CD4-positive, alpha-beta memory T cell (primary cell): ENCODE measurements at regions of chr2 and their contacts with region 1.

Region 1: DNA sequence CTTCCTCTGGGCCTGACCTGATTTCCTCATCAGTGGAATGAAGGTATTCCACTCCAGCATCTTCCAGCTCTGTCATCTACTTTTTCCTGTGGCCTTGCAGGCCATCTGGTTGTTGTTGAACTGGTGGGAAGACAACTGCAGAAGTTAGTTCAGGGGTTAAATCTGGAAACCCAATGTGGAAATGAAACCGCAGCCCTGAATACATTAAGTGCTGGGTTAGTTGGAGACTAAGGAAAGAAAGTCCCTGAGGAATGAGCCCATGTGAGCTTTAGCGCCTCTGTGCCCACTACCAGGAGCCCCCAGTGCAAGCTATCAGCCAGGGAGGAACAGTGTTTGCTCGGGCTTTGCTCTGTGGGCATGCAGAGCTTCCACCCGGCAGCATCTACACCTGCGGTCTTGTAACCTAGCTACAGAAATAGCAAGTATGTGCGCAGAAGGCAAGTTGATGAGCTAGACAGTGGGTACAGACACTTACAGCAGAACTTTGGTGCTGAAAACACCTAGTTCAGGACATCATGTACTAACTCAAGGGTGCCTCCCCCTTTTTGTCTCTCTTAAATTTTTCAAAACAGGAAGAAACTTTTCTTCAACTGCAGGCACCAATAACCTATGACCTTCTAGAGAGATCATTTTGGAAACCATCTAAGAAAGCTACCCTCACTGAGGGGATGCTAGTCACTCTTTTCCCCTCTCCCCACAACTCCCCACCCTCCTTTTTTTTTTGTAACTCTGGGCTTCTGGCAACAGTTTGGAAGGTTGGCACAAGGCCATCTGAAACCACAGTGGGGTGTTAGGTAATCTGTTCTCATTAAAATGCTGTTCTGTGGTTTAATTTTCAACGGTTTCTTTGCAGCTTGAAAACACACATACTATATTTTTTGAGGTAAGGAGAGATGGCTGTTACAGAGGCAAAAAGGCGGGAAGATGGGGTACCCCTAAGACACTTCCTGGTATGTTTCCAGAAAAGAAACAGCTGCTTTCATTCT is 18.3 kb upstream of the CXCR4 start:
- DNase-seq: peak; percentile 93 to 96 (median 95)
- H3K4me3 ChIP-seq: peak overlapping the region in 1 of 2 donors; percentile 18
- H3K4me3 Mint-ChIP-seq: peak overlapping the region; percentile 70 to 92 (median 80)
- H3K27ac ChIP-seq: peak overlapping the region; percentile 95
- H3K27ac Mint-ChIP-seq: peak overlapping the region; percentile 96 to 100 (median 99)
- H3K4me1 ChIP-seq: peaks cover 98% of the 10 kb centered on the region
- H3K4me1 Mint-ChIP-seq: peaks cover 72 to 98% (median 89%) of the 10 kb centered on the region in 4 donors
- H3K27me3 ChIP-seq: no peaks in the 10 kb centered on the region
- H3K27me3 Mint-ChIP-seq: no peaks in the 10 kb centered on the region

Region 2: DNA sequence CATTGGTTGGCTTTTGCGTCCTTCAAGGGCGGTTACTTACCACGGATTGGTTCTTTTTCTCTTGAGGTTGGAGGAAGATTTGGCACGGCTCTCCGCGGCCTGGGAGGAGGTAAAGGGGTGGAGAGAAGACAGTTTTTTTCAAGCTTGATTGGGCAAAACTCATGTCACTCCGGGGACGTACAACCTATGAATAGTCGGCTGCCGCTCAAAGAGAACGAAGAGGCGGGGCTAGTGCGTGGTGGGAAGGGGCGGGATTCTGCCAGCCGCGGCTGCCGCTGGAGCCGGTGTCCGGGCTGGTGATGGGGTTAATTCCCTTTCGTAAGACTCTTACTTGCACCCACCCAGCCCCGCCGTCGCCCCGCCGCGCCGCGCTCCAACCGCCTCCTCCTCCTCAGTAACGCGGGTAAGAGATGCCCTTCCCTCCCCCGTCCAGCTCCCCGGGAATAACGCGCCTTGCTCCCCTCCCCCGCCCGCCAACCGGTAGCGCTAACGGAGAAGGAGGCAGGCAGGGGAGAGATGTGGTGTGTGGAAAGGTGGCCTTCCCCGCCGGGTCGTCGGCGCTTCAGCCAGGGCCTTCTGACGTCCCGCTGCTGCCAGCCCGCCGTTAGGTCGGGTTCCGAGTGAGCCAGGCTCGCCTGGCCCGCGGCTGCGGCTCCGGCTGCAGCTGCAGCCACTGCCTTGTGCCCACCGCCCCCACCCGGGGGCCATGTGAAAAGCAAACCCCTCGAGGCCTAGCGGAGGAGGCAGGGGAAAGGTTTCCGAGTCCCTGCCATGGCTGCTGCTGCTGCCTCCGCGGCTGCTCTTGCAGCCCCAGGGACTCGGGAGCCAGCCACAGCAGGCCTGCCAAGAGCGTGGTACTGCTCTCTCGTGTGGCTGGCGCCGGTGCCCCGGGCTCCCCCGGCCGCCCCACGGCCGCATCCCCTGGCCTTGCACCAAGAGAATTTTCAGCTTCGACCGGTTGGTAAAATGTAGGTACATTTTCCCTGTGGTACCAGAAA is 604.7 kb before region 1 on chr2 and contains the start of gene R3HDM1:
- CTCF ChIA-PET with region 1: no interaction called
- POLR2A ChIA-PET with region 1: no interaction called
- intact Hi-C with region 1: loop called (anchors 10 kb)
- DNase-seq: peak in 4 of 5 donors; percentile 98 to 99 (median 98)
- H3K4me3 ChIP-seq: peak within 1 kb of the TSS; percentile 86 to 98
- H3K4me3 Mint-ChIP-seq: no peak within 1 kb of the TSS
- H3K27ac ChIP-seq: peak within 1 kb of the TSS; percentile 89
- H3K27ac Mint-ChIP-seq: peak within 1 kb of the TSS in 6 of 7 donors; percentile 59 to 91 (median 78)
- H3K4me1 ChIP-seq: peaks cover 29% of the 10 kb centered on the region
- H3K4me1 Mint-ChIP-seq: peaks cover 11 to 25% (median 18%) of the 10 kb centered on the region in 4 donors
- H3K27me3 ChIP-seq: no peaks in the 10 kb centered on the region
- H3K27me3 Mint-ChIP-seq: no peaks in the 10 kb centered on the region
- total RNA-seq, gene R3HDM1: 40.5 to 42.3 TPM

Region 3: DNA sequence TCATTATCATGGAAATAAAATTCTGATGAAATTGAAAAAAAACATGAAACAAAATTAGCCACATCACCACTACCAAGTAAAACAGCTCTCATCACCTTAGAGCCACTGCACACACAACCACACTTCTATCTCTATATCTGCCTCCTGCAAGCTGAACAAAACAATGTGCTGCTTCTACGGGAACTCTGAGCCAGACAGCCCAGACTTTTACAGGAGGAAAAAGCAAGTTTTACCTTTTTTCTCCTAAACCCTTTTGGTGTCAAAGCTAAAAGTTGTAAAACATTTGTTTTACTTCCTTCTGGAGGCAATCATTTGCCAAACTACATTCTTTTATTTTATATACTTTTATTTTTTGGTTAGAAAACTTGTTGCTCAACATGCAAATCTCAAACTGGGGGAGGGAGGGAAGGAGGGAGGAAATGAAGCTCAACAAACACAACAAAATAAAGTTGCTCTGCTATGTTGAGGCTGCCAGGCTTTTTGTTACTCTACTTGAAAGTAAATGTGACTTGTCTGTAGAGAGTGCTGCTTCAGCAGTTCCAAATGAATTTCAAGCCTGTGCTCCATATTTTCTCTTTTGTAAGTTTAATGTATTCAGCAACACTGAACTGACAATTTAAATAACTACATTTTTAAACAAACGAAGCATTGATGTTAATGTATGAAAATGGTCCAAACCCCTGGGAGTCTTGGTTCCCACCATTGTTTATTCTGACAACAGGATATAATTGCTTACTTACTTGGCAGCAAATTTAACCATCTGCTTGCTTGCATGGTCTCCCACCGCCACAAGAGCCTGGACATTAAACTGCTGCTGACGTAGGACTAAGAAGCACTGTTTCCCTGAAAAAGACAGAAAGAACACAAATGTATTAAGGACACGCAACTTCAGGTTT is 175.3 kb before region 1 on chr2:
- CTCF ChIA-PET with region 1: interaction called, 3 read pairs
- POLR2A ChIA-PET with region 1: interaction called, 16 read pairs
- intact Hi-C with region 1: no loop called
- DNase-seq: peak; percentile 38 to 55 (median 43)
- H3K4me3 ChIP-seq: peak overlapping the region in 1 of 2 donors; percentile 6
- H3K4me3 Mint-ChIP-seq: peak overlapping the region; percentile 9 to 79 (median 53)
- H3K27ac ChIP-seq: peak overlapping the region; percentile 60
- H3K27ac Mint-ChIP-seq: peak overlapping the region; percentile 76 to 96 (median 89)
- H3K4me1 ChIP-seq: peaks cover 49% of the 10 kb centered on the region
- H3K4me1 Mint-ChIP-seq: peaks cover 44 to 70% (median 55%) of the 10 kb centered on the region in 4 donors
- H3K27me3 ChIP-seq: no peaks in the 10 kb centered on the region
- H3K27me3 Mint-ChIP-seq: no peaks in the 10 kb centered on the region

Region 4: GRCh38 chr2:136117909-136118818 is 18.1 kb before region 1 on chr2 and contains the start of gene CXCR4:
- CTCF ChIA-PET with region 1: interaction called, 24 read pairs
- POLR2A ChIA-PET with region 1: interaction called, 599 read pairs
- intact Hi-C with region 1: loop called (anchors 1 kb)
- DNase-seq: peak; percentile 85 to 96 (median 90)
- H3K4me3 ChIP-seq: peak within 1 kb of the TSS; percentile 65 to 95
- H3K4me3 Mint-ChIP-seq: peak within 1 kb of the TSS; percentile 98 to 100 (median 99)
- H3K27ac ChIP-seq: peak within 1 kb of the TSS; percentile 94
- H3K27ac Mint-ChIP-seq: peak within 1 kb of the TSS; percentile 99 to 100 (median 99)
- H3K4me1 ChIP-seq: peaks cover 44% of the 10 kb centered on the region
- H3K4me1 Mint-ChIP-seq: peaks cover 38 to 95% (median 55%) of the 10 kb centered on the region in 4 donors
- H3K27me3 ChIP-seq: no peaks in the 10 kb centered on the region
- H3K27me3 Mint-ChIP-seq: no peaks in the 10 kb centered on the region
- total RNA-seq, gene CXCR4: 306 to 308 TPM

Region 5: GRCh38 chr2:136281281-136282114 is 145.3 kb after region 1 on chr2:
- CTCF ChIA-PET with region 1: no interaction called
- POLR2A ChIA-PET with region 1: interaction called, 13 read pairs
- intact Hi-C with region 1: no loop called
- DNase-seq: peak; percentile 67 to 88 (median 70)
- H3K4me3 ChIP-seq: no peak overlapping the region
- H3K4me3 Mint-ChIP-seq: peak overlapping the region in 7 of 8 donors; percentile 44 to 75 (median 69)
- H3K27ac ChIP-seq: peak overlapping the region; percentile 36
- H3K27ac Mint-ChIP-seq: peak overlapping the region; percentile 90 to 99 (median 96)
- H3K4me1 ChIP-seq: peaks cover 34% of the 10 kb centered on the region
- H3K4me1 Mint-ChIP-seq: peaks cover 24 to 54% (median 35%) of the 10 kb centered on the region in 4 donors
- H3K27me3 ChIP-seq: no peaks in the 10 kb centered on the region
- H3K27me3 Mint-ChIP-seq: no peaks in the 10 kb centered on the region